ENCODE measurements at regions of chr2 and their contacts with region 1.

Region 1: DNA sequence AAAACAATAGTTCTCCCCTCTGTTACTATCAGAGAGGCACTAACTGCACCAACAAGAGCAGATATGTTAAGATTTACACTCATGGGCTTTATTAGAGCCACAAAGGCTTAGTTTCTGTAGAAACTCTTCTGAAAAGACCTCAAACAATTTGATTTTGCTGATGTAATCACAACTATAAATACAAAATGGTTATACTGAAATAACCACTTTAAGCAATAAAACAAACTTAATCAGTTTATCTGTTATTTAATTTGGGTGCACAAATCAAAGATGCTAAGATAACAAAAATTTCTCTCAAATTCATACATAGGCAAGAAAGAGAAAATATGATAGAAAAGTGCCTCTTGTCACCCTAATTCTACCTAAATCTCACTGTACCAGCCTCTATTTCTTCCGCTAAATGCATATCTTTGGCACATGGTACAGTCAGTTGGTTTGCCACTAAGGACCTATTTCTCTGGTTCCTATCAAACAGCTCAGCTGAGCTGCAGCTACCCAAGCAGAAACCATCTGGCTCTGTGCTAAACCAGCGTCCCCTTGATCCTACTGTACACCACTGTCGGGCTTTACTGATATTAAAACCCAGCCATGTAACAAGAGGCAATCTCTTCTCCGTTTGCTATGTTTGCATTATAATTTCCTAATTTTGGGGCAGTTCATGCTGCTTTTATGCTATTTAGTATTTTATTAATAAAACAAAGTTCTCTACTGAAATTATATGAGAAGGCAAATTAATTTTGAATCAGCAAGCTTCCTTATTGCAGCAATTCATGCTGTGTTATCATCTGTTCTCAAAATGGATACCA is 60.1 kb downstream of the CWC22 start:
- DNase-seq: no peak
- ATAC-seq: no peak
- H3K4me3 Mint-ChIP-seq: no peak overlapping the region
- H3K27ac Mint-ChIP-seq: no peak overlapping the region
- H3K4me1 Mint-ChIP-seq: no peaks in the 10 kb centered on the region
- H3K27me3 Mint-ChIP-seq: no peaks in the 10 kb centered on the region
- CTCF ChIP-seq: no peak

Region 2: GRCh38 chr2:179965291-179966258 is 18.6 kb after region 1 on chr2:
- CTCF ChIA-PET with region 1: no interaction called
- POLR2A ChIA-PET with region 1: no interaction called
- intact Hi-C with region 1: loop called (anchors 2 kb)
- DNase-seq: no peak
- ATAC-seq: no peak
- H3K4me3 Mint-ChIP-seq: no peak overlapping the region
- H3K27ac Mint-ChIP-seq: no peak overlapping the region
- H3K4me1 Mint-ChIP-seq: no peaks in the 10 kb centered on the region
- H3K27me3 Mint-ChIP-seq: no peaks in the 10 kb centered on the region
- CTCF ChIP-seq: no peak

Region 3: GRCh38 chr2:179981085-179981484 is 34.1 kb after region 1 on chr2:
- CTCF ChIA-PET with region 1: no interaction called
- POLR2A ChIA-PET with region 1: no interaction called
- intact Hi-C with region 1: loop called (anchors 5 kb)
- DNase-seq: no peak
- ATAC-seq: no peak
- H3K4me3 Mint-ChIP-seq: no peak overlapping the region
- H3K27ac Mint-ChIP-seq: no peak overlapping the region
- H3K4me1 Mint-ChIP-seq: no peaks in the 10 kb centered on the region
- H3K27me3 Mint-ChIP-seq: no peaks in the 10 kb centered on the region
- CTCF ChIP-seq: no peak